Uterus (tissue), 4 donors: ENCODE measurements at regions of chr17 and their contacts with region 1.

Region 1: DNA sequence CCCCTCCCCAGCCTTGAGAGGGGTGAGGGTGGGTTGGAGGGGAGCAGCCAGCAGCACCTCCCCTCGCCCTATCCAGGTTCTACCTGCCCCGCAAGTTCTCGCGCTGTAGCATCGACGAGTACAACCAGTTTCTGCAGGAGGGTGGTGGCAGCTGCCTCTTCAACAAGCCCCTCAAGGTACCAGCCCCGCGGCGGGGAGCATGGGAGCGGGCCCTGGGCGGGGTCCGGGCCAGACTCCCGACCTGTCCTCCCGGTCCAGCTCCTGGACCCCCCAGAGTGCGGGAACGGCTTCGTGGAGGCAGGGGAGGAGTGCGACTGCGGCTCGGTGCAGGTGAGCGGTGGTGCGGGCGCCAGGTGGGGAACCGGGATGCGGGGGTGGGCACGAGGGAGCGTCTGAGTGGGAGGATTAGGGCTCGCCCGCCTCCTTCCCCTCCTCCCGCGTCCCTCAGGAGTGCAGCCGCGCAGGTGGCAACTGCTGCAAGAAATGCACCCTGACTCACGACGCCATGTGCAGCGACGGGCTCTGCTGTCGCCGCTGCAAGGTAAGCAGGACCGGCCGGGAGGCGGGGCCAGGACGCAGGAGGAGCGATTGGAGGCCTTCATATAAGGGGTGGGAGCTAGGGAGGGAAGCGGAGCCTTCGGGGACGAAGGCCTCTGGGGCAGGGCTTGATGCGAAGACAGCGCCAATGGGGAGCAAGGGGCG is 16.5 kb downstream of the ADAM11 start:
- DNase-seq: peak in 1 of 2 donors; percentile 98
- H3K4me3 ChIP-seq: peak overlapping the region; percentile 57 to 70
- H3K27ac ChIP-seq: peak overlapping the region; percentile 9 to 26
- H3K4me1 ChIP-seq: peaks cover 0 to 9% of the 10 kb centered on the region in 2 donors
- H3K27me3 ChIP-seq: no peaks in the 10 kb centered on the region
- CTCF ChIP-seq: no peak
- POLR2A ChIP-seq: no peak

Region 2: GRCh38 chr17:44376124-44376523 is 399.2 kb before region 1 on chr17:
- intact Hi-C with region 1: no loop called
- DNase-seq: peak in 1 of 2 donors; percentile 22
- H3K4me3 ChIP-seq: no peak overlapping the region
- H3K27ac ChIP-seq: no peak overlapping the region
- H3K4me1 ChIP-seq: no peaks in the 10 kb centered on the region
- H3K27me3 ChIP-seq: no peaks in the 10 kb centered on the region
- CTCF ChIP-seq: no peak
- POLR2A ChIP-seq: no peak

Region 3: DNA sequence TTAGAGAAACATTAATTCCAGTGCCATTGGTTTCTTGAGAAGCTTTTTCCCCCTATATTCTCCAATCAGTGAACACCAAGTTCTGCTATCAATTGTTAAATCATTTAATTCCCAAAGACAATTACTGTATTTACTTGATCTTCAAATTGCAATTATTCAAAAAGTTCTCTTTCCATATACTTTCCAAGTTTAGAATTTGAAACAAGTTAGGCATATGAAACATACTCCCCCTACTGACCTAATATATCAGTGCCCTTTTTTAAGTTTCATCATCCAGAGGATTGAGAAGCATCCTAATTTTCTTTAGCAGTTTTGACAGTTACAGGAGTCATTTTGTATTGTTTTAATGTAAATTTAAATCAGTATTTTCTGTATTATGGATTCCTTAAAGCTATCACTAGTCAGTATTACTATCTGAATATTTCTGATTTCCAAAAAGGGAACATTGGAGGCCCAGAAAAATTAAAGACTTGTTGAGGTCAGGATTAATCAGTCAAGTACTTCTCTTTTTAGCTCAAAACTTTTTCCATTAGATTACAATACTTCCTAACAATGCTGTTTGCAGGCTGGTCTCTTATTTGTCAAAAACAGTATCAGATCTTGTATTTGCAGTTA is 102.7 kb before region 1 on chr17:
- intact Hi-C with region 1: no loop called
- DNase-seq: no peak
- H3K4me3 ChIP-seq: no peak overlapping the region
- H3K27ac ChIP-seq: no peak overlapping the region
- H3K4me1 ChIP-seq: no peaks in the 10 kb centered on the region
- H3K27me3 ChIP-seq: no peaks in the 10 kb centered on the region
- CTCF ChIP-seq: peak in 1 of 4 experiments; percentile 25
- POLR2A ChIP-seq: no peak

Region 4: GRCh38 chr17:44864866-44865660 is 89.8 kb after region 1 on chr17:
- intact Hi-C with region 1: loop called (anchors 5 kb)
- DNase-seq: peak; percentile 57 to 83
- H3K4me3 ChIP-seq: no peak overlapping the region
- H3K27ac ChIP-seq: peak overlapping the region; percentile 60 to 85
- H3K4me1 ChIP-seq: no peaks in the 10 kb centered on the region
- H3K27me3 ChIP-seq: no peaks in the 10 kb centered on the region
- CTCF ChIP-seq: peak; percentile 83 to 92 (median 85)
- POLR2A ChIP-seq: no peak

Region 5: DNA sequence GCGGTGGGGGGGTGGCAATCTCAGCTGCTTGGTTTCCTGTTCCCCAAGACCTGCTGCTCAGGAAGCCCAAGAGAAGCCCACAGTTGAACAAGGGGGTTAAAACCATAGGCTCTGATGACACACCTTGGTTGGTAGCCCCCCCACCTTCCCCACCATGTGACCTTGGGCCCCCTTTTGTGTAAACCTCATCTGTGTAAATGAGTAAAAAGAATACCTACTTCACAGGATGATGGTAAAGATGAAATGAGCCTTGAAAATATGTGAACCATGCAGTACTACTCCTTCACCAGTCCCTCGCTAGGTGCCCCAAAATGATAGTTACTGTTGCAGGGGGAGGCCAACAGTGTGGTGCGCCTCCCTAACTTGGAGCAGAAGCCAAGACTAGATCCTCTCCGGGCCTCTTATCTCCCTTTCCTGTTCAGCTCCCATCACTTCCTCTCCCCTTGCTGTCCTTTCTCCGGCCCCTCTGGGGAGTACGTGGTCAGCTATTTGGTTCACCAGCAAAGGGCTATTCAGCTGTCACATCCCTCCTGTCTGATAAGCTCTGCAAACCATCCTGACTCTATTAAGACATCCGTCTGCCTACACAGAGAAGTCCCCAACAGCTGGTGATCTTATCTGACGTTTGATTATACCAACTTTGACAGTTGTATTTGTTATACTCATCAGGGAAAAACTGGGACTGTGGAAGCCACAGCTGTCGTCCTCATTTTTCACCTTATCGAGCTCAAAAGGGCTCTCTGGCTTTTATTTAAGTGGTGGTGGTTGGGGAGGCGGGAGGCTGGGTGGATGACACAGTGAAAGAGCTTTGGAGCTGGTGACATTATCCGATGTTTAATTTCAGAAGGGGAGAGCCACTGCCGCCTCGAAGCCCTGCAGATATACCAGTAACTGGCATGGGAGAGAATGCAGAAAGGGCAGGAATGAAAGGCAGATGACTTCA is 256.2 kb after region 1 on chr17:
- intact Hi-C with region 1: loop called (anchors 5 kb)
- DNase-seq: no peak
- H3K4me3 ChIP-seq: no peak overlapping the region
- H3K27ac ChIP-seq: no peak overlapping the region
- H3K4me1 ChIP-seq: no peaks in the 10 kb centered on the region
- H3K27me3 ChIP-seq: no peaks in the 10 kb centered on the region
- CTCF ChIP-seq: no peak
- POLR2A ChIP-seq: no peak